ENCODE measurements at regions of chr12 and their contacts with region 1.

Region 1: DNA sequence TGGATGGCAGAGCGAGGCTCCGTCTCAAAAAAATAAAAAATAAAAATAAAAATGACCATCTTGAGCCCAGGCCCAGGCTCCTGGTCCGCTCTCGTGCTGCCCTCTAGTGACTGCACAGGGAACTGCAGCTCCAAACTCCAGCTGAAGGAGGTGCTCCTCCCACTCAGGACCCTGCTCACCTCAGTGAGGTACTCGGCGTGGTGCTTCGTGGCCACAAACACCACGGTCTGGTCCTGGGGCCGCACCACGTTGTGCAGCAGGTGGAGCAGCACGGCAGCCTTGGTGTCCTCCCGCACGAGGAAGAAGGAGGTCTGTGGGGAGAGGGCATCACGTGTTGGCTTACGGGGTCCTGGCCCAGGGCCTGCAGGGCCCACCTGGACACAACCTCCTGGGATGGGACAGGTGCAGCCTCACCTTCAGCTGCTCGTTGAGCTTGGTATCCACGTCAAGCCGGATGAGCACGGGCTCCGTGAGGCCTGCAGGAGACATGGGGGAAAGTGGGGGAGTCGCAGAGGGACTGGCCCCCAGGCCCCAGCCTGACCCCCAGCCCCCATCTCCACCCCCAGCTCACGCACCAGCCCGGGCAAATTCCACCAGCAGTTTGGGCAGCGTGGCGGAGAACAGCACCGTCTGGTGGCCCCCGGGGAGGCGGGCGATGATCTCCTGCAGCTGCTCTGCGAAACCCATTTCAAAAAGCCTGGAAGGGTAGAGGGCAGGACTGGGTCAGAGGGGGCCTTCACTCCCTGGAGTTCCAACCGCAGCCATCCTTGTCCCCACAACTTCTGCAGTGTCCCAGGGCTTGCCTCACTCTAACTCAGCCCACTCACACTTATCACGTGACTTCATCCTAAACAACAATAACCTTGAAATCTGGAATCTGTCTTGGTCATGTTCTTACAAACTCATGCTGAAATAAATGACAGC is 10.6 kb downstream of the DDX54 start:
- DNase-seq: peak; percentile 87
- ATAC-seq: peak; percentile 95
- H3K4me3 Mint-ChIP-seq: no peak overlapping the region
- H3K27ac Mint-ChIP-seq: no peak overlapping the region
- H3K4me1 Mint-ChIP-seq: peaks cover 2% of the 10 kb centered on the region
- H3K27me3 Mint-ChIP-seq: no peaks in the 10 kb centered on the region
- CTCF ChIP-seq: peak; percentile 100

Region 2: DNA sequence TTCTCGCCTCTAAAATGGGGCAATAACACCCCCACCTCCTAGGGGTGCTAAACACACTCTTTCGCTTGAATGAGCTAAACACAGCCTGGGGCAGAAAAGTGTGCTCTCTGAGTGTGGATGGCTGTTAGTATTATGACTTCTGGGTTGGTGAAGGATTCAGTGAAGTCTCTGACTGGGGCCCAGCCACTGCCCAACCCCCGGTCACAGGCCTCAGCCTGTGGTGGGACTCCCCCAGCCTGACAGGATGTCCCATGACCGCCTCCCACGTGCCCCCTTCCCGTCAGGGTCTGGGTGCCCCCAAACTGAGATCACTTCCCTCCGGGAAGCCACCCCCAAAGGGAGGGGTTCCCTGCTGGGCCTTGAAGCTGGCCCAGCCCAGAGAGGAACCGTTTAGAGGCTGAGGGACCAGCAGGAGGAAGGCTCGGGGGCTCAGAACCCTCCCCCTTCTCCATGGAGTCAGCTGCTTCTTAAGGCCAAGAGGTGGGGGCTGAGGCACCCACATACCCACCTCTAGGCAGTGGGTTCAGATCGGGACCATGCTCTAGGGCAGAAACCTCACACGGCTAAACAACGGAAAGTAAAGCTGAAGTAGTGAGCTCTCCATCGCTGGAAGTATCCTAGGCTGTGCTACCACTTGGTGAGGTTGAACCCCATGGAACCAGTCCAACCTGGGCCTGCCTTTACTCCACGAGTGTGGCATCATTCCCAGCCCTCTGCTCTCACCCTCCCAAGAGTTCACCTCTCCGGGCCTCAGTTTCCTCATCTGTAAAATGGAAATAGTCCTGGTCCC is 104.4 kb before region 1 on chr12:
- CTCF ChIA-PET with region 1: interaction called, 10 read pairs
- POLR2A ChIA-PET with region 1: no interaction called
- intact Hi-C with region 1: no loop called
- DNase-seq: peak; percentile 92
- ATAC-seq: peak; percentile 90
- H3K4me3 Mint-ChIP-seq: peak overlapping the region; percentile 54
- H3K27ac Mint-ChIP-seq: peak overlapping the region; percentile 87
- H3K4me1 Mint-ChIP-seq: peaks cover 54% of the 10 kb centered on the region
- H3K27me3 Mint-ChIP-seq: no peaks in the 10 kb centered on the region
- CTCF ChIP-seq: no peak

Region 3: GRCh38 chr12:113135178-113136127 is 39.3 kb before region 1 on chr12 and contains the start of gene RASAL1:
- CTCF ChIA-PET with region 1: interaction called, 16 read pairs
- POLR2A ChIA-PET with region 1: no interaction called
- intact Hi-C with region 1: no loop called
- DNase-seq: peak; percentile 95
- ATAC-seq: peak; percentile 91
- H3K4me3 Mint-ChIP-seq: peak within 1 kb of the TSS; percentile 66
- H3K27ac Mint-ChIP-seq: peak within 1 kb of the TSS; percentile 86
- H3K4me1 Mint-ChIP-seq: peaks cover 18% of the 10 kb centered on the region
- H3K27me3 Mint-ChIP-seq: no peaks in the 10 kb centered on the region
- CTCF ChIP-seq: peak; percentile 88
- total RNA-seq, gene RASAL1: 9.8 to 12.4 TPM

Region 4: DNA sequence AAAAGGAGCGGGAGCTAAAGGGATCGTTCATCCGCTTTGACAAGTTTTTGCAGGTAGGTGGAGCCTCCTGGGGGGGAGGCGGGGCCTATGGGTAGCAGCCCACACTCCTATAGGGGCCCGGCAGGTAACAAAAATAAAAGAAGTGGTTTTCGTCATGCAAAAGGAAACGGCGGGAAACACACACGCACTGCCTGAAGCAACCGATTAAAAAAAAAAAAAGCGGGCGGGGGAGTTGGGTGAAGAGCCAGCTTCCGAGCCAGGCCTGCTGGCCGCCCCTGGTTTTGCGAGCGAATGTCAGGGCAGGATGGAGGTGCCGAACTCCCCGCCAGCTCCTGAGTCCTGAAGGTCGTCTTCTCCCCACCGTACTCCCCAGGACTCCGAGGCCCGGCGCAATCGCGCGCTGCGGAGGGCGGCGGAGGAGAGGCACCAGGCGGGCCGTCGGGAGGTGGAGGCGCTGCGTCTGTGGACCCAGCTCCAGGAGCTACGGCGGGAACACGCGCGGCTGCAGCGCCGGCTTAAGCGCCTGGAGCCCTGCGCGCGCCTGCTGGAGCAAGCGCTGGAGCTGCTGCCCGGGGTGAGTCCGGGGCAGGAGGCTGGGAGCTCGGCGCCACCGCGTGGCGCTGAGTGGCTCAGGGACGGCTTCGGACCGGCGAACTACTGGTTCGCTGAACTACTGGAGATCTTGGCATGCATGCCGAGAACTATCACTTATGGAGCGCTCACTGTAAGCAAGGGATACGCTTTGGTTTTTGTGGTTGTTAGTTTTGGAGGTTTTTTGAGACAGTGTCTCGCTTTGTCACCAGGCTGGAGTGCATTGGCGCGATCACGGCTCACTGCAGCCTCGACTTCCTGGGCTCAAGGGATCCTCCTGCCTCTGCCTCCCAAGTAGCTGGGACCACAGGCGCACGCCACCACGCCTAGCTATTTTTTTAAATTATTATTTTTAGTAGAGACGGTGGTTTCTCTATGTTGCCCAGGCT is 21.6 kb before region 1 on chr12:
- CTCF ChIA-PET with region 1: interaction called, 65 read pairs
- POLR2A ChIA-PET with region 1: interaction called, 4 read pairs
- intact Hi-C with region 1: no loop called
- DNase-seq: peak; percentile 83
- ATAC-seq: peak; percentile 83
- H3K4me3 Mint-ChIP-seq: peak overlapping the region; percentile 72
- H3K27ac Mint-ChIP-seq: peak overlapping the region; percentile 73
- H3K4me1 Mint-ChIP-seq: peaks cover 28% of the 10 kb centered on the region
- H3K27me3 Mint-ChIP-seq: peaks cover 21% of the 10 kb centered on the region
- CTCF ChIP-seq: peak; percentile 51

Region 5: GRCh38 chr12:113161414-113162016 is 13.2 kb before region 1 on chr12:
- CTCF ChIA-PET with region 1: interaction called, 65 read pairs
- POLR2A ChIA-PET with region 1: interaction called, 18 read pairs
- intact Hi-C with region 1: no loop called
- DNase-seq: peak; percentile 44
- ATAC-seq: peak; percentile 68
- H3K4me3 Mint-ChIP-seq: no peak overlapping the region
- H3K27ac Mint-ChIP-seq: no peak overlapping the region
- H3K4me1 Mint-ChIP-seq: peaks cover 8% of the 10 kb centered on the region
- H3K27me3 Mint-ChIP-seq: no peaks in the 10 kb centered on the region
- CTCF ChIP-seq: no peak

Region 6: GRCh38 chr12:113184900-113185773 is 10.4 kb after region 1 on chr12 and contains the starts of genes DDX54 and RITA1:
- CTCF ChIA-PET with region 1: interaction called, 36 read pairs
- POLR2A ChIA-PET with region 1: interaction called, 8 read pairs
- intact Hi-C with region 1: no loop called
- DNase-seq: peak; percentile 93
- ATAC-seq: peak; percentile 86
- H3K4me3 Mint-ChIP-seq: peak within 1 kb of the TSS; percentile 97
- H3K27ac Mint-ChIP-seq: peak within 1 kb of the TSS; percentile 97
- H3K4me1 Mint-ChIP-seq: peaks cover 36% of the 10 kb centered on the region
- H3K27me3 Mint-ChIP-seq: no peaks in the 10 kb centered on the region
- CTCF ChIP-seq: no peak
- total RNA-seq, gene DDX54: 112 to 133 TPM
- total RNA-seq, gene RITA1: 18.5 to 19.1 TPM

Measured in activated CD8-positive, alpha-beta T cell treated with anti-CD3 and anti-CD28 coated beads for 36 hours (primary cell).